Right ventricle myocardium inferior (tissue), 1 donor: ENCODE measurements at regions of chr10 and their contacts with region 1.

Region 1: GRCh38 chr10:91163269-91163868 is 57.1 kb upstream of the PCGF5 start:
- DNase-seq: peak; percentile 87
- ATAC-seq: peak; percentile 51

Region 2: DNA sequence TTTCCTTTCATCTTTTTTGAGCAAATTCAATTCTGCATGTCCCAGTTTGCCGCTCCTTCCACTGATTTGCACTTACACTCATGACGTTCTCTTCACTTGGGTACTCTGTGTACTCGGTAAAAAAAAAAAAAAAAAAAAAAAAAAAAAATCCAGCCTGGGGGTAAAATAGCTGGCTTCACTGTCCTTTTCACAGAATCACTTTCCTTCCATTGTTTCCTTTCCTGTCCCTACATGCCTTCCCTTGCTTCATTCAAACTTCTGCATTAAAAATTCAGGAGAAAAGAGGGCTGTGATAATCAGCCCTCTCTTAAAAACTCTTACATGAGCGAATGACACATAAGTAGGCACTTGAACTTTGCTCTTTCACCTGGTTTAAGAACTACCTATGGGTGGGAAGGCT is 251.2 kb before region 1 on chr10:
- intact Hi-C with region 1: loop called (anchors 10 kb)
- DNase-seq: no peak
- ATAC-seq: no peak

Region 3: DNA sequence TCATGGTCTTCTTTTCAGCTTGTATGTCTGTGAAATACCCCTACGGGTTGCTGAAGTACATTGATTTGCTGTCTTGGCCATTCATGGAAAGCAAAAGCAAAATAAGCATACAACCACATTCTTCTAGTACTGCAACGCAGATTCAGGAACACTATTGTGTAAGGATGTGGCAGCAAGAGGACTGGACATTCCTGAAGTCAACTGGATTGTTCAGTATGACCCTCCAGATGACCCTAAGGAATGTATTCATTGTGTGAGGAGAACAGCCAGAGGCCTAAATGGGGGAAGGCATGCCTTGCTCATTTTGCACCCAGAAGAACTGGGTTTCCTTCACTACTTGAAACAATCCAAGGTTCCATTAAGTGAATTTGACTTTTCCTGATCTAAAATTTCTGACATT is 109.0 kb before region 1 on chr10:
- intact Hi-C with region 1: no loop called
- DNase-seq: no peak
- ATAC-seq: no peak

Region 4: DNA sequence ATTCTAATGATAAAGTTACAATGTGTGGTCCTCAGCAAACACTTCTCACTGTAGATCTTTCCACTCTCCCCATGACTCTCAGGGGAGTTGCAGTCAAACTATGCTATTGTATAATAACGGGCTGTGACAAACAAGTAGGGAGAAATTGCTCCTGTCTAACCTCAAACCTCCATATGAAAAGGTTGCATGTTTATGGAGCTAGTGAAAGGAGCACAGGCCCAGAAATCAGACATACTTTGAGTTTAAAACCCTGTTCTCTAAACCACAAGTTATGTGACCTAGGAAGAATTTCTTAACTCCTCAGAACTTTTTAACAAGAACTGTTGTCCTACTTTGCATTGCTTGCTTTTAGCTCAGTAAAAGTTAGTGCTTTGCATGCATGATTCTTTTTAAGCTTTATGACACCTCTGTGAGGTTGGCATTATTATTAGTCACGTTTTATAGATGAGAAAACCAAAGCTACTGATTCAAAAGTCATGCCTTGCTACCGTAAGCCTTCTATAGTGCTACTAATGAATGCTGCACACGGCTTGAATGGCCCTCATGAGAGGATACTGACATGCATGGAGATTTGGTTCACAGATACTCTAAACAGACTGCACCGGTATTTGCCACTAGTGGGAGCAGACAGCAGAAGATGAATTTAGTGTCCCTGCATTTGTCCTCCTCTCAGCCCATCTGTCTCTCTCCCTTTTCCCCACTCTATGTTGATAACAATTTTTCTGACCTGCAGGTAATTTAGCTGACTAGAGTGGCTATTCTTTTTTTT is 72.4 kb before region 1 on chr10:
- intact Hi-C with region 1: loop called (anchors 5 kb)
- DNase-seq: no peak
- ATAC-seq: peak; percentile 35

Region 5: DNA sequence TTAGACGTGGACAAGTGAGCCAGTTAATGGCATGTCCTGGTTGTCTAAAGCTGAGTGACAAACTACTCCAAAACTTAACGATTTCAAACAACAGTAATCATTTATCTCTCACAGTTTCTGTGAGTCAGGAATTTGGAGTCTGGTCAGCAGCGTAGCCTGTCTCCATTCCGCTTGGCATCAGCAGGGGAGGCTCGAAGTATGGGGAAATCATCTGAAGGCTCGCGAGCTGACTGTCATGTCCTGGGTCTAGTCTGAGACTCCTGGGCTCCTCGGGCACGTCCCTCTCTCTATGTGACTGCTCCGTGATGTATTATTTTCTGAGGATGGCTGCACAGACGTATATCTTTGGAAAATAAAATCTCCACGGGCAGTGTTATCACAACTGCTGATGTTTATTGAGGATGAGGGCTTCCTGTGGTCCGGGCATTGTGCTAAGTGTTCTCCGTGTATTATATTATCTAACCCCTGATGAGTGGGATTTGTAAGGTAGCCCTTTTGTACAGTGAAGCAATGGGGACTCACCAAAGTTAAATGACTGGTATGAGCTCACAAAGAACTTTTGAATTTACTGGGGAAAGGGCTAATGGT is 33.8 kb after region 1 on chr10:
- intact Hi-C with region 1: loop called (anchors 2 kb)
- DNase-seq: peak; percentile 57
- ATAC-seq: peak; percentile 69

Region 6: DNA sequence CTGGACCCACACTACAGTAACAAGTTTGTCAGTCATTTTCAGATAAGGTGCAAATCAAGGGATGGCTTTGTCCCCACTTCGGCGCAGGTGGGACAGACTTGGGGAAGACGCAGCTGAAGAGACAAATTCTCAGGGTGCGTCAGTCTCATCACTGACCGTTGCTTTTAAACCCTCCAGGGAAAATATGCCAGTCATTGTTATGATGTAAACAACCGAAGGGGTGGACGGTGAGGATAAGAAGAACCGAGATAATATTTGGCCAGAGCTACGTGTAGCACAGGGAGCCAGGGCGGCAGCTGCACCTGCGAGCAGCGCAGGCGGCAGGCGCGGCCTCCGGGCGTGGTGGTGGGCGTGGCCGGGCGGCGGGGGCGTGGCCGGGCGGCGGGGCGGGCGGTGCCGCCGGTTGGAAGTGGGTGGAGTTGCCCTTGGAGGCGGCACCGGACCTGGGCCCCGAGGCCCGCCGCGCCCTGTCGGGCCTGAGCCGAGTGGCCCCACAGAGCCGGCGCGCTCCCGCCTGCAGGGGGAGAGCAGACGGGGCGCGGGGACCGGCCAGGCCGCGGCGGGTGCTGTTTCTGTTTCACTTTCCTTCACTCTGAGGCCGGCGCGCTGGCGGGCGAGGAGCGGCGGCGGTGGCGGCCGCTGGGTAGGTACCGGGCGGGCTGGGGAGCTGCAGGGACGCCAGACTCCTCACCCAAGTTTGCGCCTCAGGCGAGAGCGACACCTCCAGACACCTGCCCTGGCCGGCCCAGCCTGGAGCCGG is 57.0 kb after region 1 on chr10 and contains the start of gene PCGF5:
- intact Hi-C with region 1: loop called (anchors 2 kb)
- DNase-seq: peak; percentile 96
- ATAC-seq: peak; percentile 100
- total RNA-seq, gene PCGF5: 63.2 TPM